Heart left ventricle (tissue), 16 donors: ENCODE measurements at regions of chr9 and their contacts with region 1.

Region 1: DNA sequence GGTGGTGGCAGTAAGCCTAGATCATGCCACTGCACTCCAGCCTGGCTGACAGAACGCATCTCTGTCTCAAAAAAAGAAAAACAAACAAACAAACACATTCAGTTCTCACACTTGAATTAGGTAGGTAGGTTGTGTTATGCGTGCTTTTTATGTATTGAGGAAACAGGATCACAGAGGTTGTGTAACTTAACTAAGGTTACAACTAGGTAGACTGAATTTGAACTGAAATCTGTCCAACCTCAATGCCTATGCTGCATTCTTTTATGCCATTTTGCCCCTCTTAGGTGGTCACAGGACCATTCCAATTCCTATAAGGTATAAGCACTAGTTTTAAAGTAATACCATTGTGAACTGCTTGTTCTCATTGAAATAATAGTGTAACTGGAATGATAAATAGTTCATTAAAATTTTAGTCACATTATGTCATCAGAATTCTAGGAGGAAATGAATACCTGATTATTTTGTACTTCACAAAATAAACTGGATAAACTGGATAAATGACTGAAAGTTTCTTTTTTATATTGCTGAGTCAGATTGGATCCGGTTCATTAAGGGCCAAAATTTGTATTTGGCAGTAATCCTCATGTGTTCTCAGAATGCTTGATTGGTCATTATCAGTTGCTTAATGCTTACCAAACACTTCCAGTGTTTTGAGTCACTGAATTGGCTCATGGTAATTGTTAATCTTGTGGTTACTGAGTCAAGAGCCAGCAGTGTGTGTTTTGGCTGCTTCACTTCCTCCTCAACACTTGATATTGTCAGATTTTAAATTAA is 7.1 kb downstream of the UBAP1 start:
- DNase-seq: peak in 4 of 5 donors; percentile 40 to 52 (median 44)
- ATAC-seq: peak; percentile 84 to 97 (median 95)
- H3K4me3 ChIP-seq: no peak overlapping the region
- H3K27ac ChIP-seq: peak overlapping the region in 11 of 12 donors; percentile 0 to 72 (median 55)
- H3K4me1 ChIP-seq: peaks cover 6 to 56% (median 44%) of the 10 kb centered on the region in 12 donors
- H3K27me3 ChIP-seq: no peaks in the 10 kb centered on the region
- CTCF ChIP-seq: no peak
- POLR2A ChIP-seq: no peak

Region 2: DNA sequence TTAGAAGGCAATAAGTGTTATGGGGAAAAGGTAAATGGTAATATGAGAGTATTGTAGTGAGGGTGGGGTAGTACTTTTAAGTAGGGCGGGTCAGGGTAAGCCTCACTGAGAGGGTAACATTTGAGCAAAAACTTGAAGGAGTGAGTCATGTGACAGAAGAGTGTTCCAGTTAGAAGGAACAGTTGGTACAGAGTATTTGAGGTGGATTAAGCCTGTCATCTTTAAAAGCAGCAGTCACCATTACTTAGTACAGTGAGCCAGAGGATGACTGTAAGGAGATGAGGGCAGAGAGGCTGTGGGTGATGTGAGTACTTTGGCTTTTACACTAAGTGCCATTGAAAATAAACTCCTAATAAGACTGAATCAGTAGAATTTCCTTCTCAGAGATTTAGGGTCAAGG is 47.7 kb after region 1 on chr9:
- intact Hi-C with region 1: loop called in 1 of 10 experiments (anchors 10 kb)
- DNase-seq: no peak
- ATAC-seq: no peak
- H3K4me3 ChIP-seq: no peak overlapping the region
- H3K27ac ChIP-seq: no peak overlapping the region
- H3K4me1 ChIP-seq: peaks cover 0 to 6% (median 0%) of the 10 kb centered on the region in 12 donors
- H3K27me3 ChIP-seq: no peaks in the 10 kb centered on the region
- CTCF ChIP-seq: no peak
- POLR2A ChIP-seq: no peak

Region 3: DNA sequence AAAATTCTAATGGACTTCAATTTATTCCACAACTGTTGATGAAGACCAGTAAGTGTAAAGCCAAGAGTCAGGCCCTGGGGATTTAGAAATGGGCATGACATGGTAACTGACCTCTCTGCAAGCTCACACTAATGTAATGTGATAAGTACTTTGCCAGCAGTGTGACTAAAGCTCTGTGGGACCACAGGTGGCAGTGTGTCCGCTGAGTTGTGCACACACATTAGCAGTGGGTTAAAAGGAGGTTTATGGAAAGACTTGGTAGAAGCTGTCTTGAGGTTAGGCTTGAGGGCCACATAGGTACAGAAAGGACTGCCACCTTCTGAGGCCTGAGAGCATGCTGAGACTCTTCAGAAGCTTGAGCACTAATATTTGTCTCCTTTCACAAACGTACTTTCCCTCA is 60.5 kb after region 1 on chr9:
- intact Hi-C with region 1: loop called in 2 of 10 experiments (anchors 5 to 10 kb)
- DNase-seq: no peak
- ATAC-seq: peak in 3 of 4 donors; percentile 11 to 51 (median 14)
- H3K4me3 ChIP-seq: no peak overlapping the region
- H3K27ac ChIP-seq: peak overlapping the region in 4 of 12 donors; percentile 6 to 45 (median 28)
- H3K4me1 ChIP-seq: peaks cover 0 to 50% (median 22%) of the 10 kb centered on the region in 12 donors
- H3K27me3 ChIP-seq: no peaks in the 10 kb centered on the region
- CTCF ChIP-seq: no peak
- POLR2A ChIP-seq: no peak

Region 4: DNA sequence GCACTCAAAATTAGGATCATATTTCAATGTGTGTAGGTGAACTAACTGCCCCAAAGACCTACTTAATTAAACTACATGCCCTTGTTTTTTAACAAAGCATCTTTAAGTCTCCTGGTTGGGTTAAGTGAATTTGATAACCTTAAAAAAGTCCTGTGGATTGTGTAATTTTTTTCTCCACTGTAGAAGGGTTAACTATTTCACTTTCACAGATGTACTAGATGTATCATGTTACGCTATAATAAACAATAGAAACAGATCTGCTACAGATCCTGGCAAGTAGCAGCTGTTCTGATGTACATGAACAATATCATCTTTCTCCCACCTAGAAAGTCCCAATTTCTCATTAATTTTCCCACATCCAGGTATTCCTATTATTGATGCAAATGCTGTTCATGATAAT is 124.2 kb after region 1 on chr9:
- intact Hi-C with region 1: no loop called
- DNase-seq: no peak
- ATAC-seq: no peak
- H3K4me3 ChIP-seq: no peak overlapping the region
- H3K27ac ChIP-seq: no peak overlapping the region
- H3K4me1 ChIP-seq: no peaks in the 10 kb centered on the region
- H3K27me3 ChIP-seq: no peaks in the 10 kb centered on the region
- CTCF ChIP-seq: no peak
- POLR2A ChIP-seq: no peak